Activated CD8-positive, alpha-beta memory T cell treated with anti-CD3 and anti-CD28 coated beads, Interleukin-2, amount 10 ng/mL, durations not matched to agents 7 days and 5 days (primary cell): ENCODE measurements at regions of chr1 and their contacts with region 1.

Region 1: GRCh38 chr1:23772049-23772853 is 6.0 kb upstream of the PITHD1 start:
- DNase-seq: peak; percentile 93
- ATAC-seq: peak; percentile 95
- H3K4me3 Mint-ChIP-seq: no peak overlapping the region
- H3K27ac Mint-ChIP-seq: no peak overlapping the region
- H3K4me1 Mint-ChIP-seq: peaks cover 35% of the 10 kb centered on the region
- H3K27me3 Mint-ChIP-seq: no peaks in the 10 kb centered on the region

Region 2: DNA sequence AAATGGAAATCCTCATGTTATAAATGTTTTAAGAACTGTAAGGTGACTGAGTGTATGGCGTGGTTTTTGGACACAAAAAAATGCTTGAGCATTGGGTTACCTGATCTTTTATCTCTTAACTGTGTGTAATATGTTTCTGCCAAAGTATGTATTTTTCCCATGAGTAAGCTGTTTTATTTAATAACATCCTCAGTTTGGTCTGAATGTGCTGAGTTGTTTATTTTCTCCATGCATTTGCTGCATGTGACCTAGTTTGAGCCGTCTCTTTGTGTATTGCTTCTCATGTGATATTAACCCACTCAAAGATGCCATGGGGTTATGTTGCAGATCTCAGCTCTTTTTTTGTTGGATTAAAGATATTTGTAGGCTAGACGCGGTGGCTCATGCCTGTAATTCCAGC is 12.6 kb after region 1 on chr1:
- CTCF ChIA-PET with region 1: interaction called, 38 read pairs
- DNase-seq: no peak
- ATAC-seq: no peak
- H3K4me3 Mint-ChIP-seq: no peak overlapping the region
- H3K27ac Mint-ChIP-seq: no peak overlapping the region
- H3K4me1 Mint-ChIP-seq: peaks cover 14% of the 10 kb centered on the region
- H3K27me3 Mint-ChIP-seq: no peaks in the 10 kb centered on the region

Region 3: DNA sequence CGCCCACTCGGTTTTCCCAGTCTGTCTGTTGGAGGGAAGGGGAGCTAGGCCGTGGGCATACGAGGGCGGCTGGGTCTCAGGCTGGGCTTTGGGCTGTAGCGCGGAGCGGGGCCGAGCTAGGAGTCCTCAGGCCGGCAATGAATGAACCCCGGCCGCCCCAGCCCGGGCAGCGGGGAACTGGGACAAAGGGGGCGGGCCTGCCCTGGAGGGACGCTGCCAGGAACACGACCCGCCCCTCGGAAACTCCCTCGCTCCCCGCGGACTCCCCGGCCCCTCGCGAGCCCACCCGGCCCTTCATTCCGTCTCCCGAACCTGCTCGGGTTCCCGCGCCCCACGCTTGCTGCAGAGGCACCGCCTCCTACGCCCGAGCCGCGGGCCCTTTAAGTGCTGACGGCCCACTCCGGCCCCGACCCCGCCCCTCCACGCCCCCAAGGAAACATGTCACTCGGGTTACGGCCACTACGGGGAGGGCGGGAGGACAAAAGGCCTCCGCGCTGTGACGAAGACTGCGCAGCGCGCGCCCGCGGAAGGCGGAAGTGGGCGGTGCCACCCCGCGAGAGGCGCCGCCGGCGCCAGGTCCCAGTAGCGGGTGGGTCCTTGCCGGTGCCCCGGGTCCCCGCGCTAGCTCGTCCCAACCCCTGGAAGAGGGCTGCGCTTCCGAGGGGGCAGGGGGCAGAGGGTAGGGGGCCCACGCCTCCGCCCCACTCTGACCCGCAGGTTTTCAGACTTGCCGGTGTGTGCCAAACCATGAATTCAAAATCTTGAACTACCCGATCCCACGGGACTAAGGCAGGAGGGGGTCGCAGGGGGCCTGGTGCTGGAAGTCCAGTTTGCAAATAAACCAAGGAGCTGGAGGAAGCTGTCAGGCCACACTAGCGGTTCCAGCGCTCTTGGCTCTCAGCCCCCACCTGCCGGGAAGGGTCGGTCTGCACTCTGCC is 28.4 kb after region 1 on chr1 and contains the start of gene GALE:
- CTCF ChIA-PET with region 1: interaction called, 34 read pairs
- DNase-seq: peak; percentile 98
- ATAC-seq: peak; percentile 92
- H3K4me3 Mint-ChIP-seq: peak within 1 kb of the TSS; percentile 86
- H3K27ac Mint-ChIP-seq: peak within 1 kb of the TSS; percentile 88
- H3K4me1 Mint-ChIP-seq: peaks cover 13% of the 10 kb centered on the region
- H3K27me3 Mint-ChIP-seq: no peaks in the 10 kb centered on the region
- total RNA-seq, gene GALE: 39.0 to 41.2 TPM

Region 4: DNA sequence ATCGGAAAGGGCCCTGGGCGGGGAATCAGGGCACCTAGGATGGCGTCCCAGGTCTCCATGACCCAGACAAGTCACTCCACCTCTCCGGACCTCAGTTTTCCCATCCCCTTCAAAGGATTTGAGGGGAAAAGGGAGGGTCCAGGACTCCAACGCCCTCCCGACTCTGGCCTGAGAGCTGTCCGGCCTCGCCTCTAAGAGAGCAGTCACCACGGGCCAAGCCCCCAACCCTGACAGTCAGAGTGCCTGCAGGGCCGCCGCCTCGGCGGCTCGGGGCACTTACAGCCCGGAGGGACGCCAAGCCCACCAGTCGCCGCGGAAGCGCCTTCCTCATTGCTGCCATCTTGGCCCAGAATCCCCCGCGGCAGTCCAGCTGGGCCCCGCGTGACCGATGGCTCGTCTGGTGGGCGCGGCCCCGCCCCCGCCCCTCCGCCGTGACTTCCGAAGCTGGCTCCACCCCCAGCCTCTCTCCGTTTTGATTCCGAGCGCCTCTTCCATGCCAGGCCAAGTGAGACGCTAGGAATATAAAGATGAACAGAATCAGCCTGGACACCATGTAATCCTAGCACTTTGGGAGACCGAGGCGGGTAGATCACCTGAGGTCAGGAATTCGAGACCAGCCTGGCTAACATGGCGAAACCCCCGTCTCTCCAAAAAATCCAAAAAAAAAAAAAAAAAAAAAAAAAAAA is 53.0 kb after region 1 on chr1 and contains the start of gene HMGCL:
- CTCF ChIA-PET with region 1: interaction called, 12 read pairs
- DNase-seq: peak; percentile 94
- ATAC-seq: peak; percentile 97
- H3K4me3 Mint-ChIP-seq: peak within 1 kb of the TSS; percentile 93
- H3K27ac Mint-ChIP-seq: peak within 1 kb of the TSS; percentile 94
- H3K4me1 Mint-ChIP-seq: peaks cover 20% of the 10 kb centered on the region
- H3K27me3 Mint-ChIP-seq: no peaks in the 10 kb centered on the region
- total RNA-seq, gene HMGCL: 23.8 to 29.0 TPM

Region 5: DNA sequence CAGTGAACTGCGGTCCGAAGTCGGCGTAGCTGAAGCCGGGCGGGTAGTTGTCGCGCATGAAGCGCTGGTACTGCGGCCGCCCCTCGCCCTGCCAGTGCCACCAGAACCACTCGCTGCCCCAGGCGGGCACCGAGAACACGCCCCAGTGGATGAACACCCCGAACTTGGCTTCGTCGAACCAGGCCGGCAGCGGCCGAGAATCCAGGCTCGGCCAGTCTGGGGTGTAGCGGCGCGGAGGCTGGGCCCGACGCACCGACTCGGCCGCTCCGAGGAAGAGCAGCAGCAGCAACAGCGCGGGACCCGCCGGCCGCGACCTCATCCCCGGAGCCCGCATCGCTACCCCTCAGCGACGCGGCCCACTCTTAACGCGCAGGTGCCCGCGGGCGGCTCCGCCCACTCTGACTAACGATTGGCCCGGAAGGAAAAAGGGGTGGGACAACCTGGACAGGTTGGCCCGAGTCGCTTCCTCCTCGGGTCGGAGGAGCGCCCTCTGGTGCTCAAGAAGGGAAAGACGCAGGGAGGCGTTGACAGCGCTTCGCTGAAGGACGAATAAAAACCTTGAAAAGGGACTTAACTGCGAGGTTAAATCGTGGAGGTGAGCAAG is 95.8 kb after region 1 on chr1 and contains the start of gene FUCA1:
- CTCF ChIA-PET with region 1: interaction called, 10 read pairs
- DNase-seq: peak; percentile 95
- ATAC-seq: peak; percentile 100
- H3K4me3 Mint-ChIP-seq: peak within 1 kb of the TSS; percentile 74
- H3K27ac Mint-ChIP-seq: peak within 1 kb of the TSS; percentile 79
- H3K4me1 Mint-ChIP-seq: peaks cover 36% of the 10 kb centered on the region
- H3K27me3 Mint-ChIP-seq: peaks cover 21% of the 10 kb centered on the region
- total RNA-seq, gene FUCA1: 5.6 to 6.5 TPM

Region 6: GRCh38 chr1:23916209-23917131 is 144.2 kb after region 1 on chr1:
- CTCF ChIA-PET with region 1: interaction called, 54 read pairs
- DNase-seq: peak; percentile 79
- ATAC-seq: peak; percentile 96
- H3K4me3 Mint-ChIP-seq: no peak overlapping the region
- H3K27ac Mint-ChIP-seq: no peak overlapping the region
- H3K4me1 Mint-ChIP-seq: peaks cover 23% of the 10 kb centered on the region
- H3K27me3 Mint-ChIP-seq: peaks cover 8% of the 10 kb centered on the region

Region 7: GRCh38 chr1:23936481-23937176 is 164.4 kb after region 1 on chr1:
- CTCF ChIA-PET with region 1: no interaction called
- DNase-seq: no peak
- ATAC-seq: no peak
- H3K4me3 Mint-ChIP-seq: no peak overlapping the region
- H3K27ac Mint-ChIP-seq: no peak overlapping the region
- H3K4me1 Mint-ChIP-seq: no peaks in the 10 kb centered on the region
- H3K27me3 Mint-ChIP-seq: peaks cover 15% of the 10 kb centered on the region